ENCODE measurements at regions of chr14 and their contacts with region 1.

Region 1: GRCh38 chr14:103281496-103282231 is 52.4 kb upstream of the EIF5 start:
- DNase-seq: peak; percentile 27
- H3K4me3 ChIP-seq: no peak overlapping the region
- H3K27ac ChIP-seq: no peak overlapping the region
- H3K4me1 ChIP-seq: no peaks in the 10 kb centered on the region
- H3K27me3 ChIP-seq: peaks cover 31 to 51% of the 10 kb centered on the region in 2 experiments
- CTCF ChIP-seq: peak; percentile 5 to 48
- POLR2A ChIP-seq: no peak

Region 2: DNA sequence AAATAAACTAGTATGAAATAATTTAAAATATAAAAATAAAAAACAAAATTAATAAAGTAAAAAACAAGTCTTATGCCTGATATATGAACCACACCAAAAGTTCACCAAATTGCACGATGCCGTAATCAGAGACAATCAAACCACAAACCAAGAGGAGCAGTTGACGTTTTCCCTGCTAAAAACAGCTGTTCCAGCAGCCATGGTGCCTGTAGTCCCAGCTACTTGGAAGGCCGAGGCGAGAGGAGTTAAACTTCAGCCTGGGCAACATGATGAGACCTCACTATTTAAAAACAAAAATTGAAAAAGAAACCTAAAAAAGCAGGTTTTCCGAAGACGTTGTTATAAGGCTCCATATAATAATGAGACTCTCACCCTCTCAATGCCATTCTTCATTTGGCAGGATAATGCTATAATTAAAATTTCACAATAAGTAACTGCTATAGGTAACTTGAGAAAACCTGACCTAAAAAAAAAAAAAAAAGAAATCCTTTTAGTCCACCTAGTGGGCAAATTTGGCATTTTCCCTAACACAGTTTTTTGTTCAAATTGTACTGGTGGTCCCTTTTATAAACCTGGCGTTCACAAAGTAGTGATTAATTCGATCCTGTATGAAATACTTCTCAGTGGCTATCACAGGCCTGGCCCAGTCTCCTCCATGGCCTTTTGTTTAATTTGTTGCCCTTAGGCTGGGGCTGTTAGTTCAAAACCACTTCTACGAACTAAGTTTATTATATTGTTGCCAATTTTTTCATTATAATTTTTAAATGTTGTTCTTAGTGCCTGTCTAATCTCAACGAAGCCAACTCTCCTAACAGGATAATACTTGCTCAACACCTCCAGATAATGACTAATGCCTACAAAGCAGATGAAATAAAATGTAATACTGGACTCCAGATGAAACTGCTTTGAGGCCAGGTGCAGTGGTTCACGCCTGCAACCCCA is 96.3 kb before region 1 on chr14:
- CTCF ChIA-PET with region 1: interaction called, 19 read pairs
- POLR2A ChIA-PET with region 1: no interaction called
- dilution Hi-C with region 1: no loop called
- intact Hi-C with region 1: no loop called
- DNase-seq: peak; percentile 71
- H3K4me3 ChIP-seq: no peak overlapping the region
- H3K27ac ChIP-seq: no peak overlapping the region
- H3K4me1 ChIP-seq: no peaks in the 10 kb centered on the region
- H3K27me3 ChIP-seq: peaks cover 17 to 22% of the 10 kb centered on the region in 2 experiments
- CTCF ChIP-seq: peak; percentile 36 to 47
- POLR2A ChIP-seq: no peak

Region 3: GRCh38 chr14:103232298-103232808 is 49.3 kb before region 1 on chr14:
- CTCF ChIA-PET with region 1: interaction called, 11 read pairs
- POLR2A ChIA-PET with region 1: no interaction called
- dilution Hi-C with region 1: no loop called
- intact Hi-C with region 1: no loop called
- DNase-seq: no peak
- H3K4me3 ChIP-seq: no peak overlapping the region
- H3K27ac ChIP-seq: no peak overlapping the region
- H3K4me1 ChIP-seq: peaks cover 15% of the 10 kb centered on the region
- H3K27me3 ChIP-seq: no peaks in the 10 kb centered on the region
- CTCF ChIP-seq: no peak
- POLR2A ChIP-seq: no peak

Region 4: GRCh38 chr14:103292426-103293374 is 11.0 kb after region 1 on chr14:
- CTCF ChIA-PET with region 1: interaction called, 12 read pairs
- POLR2A ChIA-PET with region 1: no interaction called
- dilution Hi-C with region 1: no loop called
- intact Hi-C with region 1: no loop called
- DNase-seq: peak; percentile 53
- H3K4me3 ChIP-seq: no peak overlapping the region
- H3K27ac ChIP-seq: no peak overlapping the region
- H3K4me1 ChIP-seq: no peaks in the 10 kb centered on the region
- H3K27me3 ChIP-seq: peaks cover 0 to 4% of the 10 kb centered on the region in 2 experiments
- CTCF ChIP-seq: peak; percentile 90
- POLR2A ChIP-seq: no peak

Region 5: DNA sequence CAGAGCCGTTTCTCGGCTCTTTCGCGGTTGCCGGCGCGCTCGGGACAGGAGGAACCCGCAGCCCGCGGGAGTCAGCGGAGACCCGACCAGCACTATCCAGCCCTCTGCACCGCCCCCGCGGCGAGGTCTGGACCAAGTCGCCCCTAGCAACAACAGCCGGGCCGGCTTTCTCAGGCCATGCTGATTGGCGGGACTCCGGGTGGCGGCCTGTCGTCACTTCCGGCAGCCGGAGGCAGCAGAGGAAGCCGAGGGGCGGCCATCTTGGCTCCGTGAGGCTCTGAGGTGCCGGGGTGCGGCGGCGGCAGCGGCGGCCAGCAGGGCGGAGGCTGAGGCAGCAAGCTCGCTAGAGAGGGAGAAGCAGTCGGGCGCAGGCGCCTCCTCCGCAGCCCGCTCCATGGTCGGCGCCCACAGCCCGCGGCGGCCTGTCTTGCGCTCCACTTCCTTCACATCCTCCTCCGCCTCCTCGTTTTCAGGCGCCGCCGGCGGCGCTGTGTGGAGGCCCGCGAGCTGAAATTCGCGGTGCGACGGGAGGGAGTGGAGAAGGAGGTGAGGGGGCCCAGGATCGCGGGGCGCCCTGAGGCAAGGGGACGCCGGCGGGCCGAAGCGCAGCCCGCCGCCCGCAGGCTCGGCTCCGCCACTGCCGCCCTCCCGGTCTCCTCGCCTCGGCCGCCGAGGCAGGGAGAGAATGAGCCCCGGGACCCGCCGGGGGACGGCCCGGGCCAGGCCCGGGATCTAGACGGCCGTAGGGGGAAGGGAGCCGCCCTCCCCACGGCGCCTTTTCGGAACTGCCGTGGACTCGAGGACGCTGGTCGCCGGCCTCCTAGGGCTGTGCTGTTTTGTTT is 103.7 kb after region 1 on chr14 and contains the start of gene MARK3:
- CTCF ChIA-PET with region 1: no interaction called
- POLR2A ChIA-PET with region 1: no interaction called
- dilution Hi-C with region 1: no loop called
- intact Hi-C with region 1: no loop called
- DNase-seq: peak; percentile 97
- H3K4me3 ChIP-seq: peak within 1 kb of the TSS; percentile 57 to 95 (median 82)
- H3K27ac ChIP-seq: peak within 1 kb of the TSS; percentile 74
- H3K4me1 ChIP-seq: peaks cover 26% of the 10 kb centered on the region
- H3K27me3 ChIP-seq: peaks cover 0 to 3% of the 10 kb centered on the region in 2 experiments
- CTCF ChIP-seq: peak; percentile 13 to 18
- POLR2A ChIP-seq: peak; percentile 88
- total RNA-seq, gene MARK3: 81.2 and 96.1 TPM in 2 replicates

Region 6: GRCh38 chr14:103656031-103656755 is 374.5 kb after region 1 on chr14:
- CTCF ChIA-PET with region 1: no interaction called
- POLR2A ChIA-PET with region 1: no interaction called
- dilution Hi-C with region 1: no loop called
- intact Hi-C with region 1: no loop called
- DNase-seq: no peak
- H3K4me3 ChIP-seq: no peak overlapping the region
- H3K27ac ChIP-seq: no peak overlapping the region
- H3K4me1 ChIP-seq: no peaks in the 10 kb centered on the region
- H3K27me3 ChIP-seq: no peaks in the 10 kb centered on the region
- CTCF ChIP-seq: no peak
- POLR2A ChIP-seq: no peak

Measured in endothelial cell of umbilical vein (primary cell).